ENCODE measurements at regions of chr5 and their contacts with region 1.

Region 1: GRCh38 chr5:108003178-108003577 is 332.4 kb upstream of the EFNA5 start:
- DNase-seq: peak; percentile 61
- ATAC-seq: peak; percentile 67
- H3K4me3 ChIP-seq: peak overlapping the region; percentile 49
- H3K27ac ChIP-seq: peak overlapping the region; percentile 35; the same call in 1 of the 2 replicates
- H3K4me1 ChIP-seq: no peaks in the 10 kb centered on the region
- H3K27me3 ChIP-seq: no peaks in the 10 kb centered on the region
- CTCF ChIP-seq: no peak
- POLR2A ChIP-seq: no peak
- RAD21 ChIP-seq: no peak

Region 2: DNA sequence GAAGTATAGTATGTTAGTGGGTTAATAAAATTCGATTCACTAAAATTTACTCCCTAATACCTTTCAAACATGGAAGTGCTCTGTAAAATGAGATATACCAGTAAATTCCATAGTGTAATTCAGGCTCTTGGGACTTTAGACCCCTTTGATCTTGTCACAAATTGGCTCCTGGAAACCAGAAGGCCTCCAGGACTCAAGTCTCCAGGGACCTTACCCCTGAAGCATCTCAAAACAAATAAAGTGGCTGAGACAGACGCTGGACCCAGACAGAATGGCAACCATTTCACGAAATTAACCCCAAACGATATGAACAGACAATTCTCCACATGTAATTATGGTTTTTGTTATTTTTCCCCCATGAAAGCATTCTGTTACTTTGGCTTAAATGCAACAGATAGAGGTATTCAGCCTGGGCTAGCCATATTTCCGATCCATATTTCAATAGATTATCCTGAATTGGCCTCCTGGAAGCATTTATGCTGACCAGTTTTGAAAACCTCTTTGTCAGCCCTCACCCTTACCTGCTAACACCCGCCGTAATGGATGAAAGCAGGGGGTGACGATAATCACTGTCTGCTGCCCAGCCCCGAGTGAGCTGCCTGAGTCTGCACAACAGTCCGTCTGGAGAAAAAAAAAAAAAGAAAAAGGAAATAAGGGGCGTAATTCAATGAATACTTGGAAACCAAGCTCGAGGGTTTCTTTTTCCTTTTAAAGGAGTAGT is 298.3 kb before region 1 on chr5:
- CTCF ChIA-PET with region 1: interaction called, 10 read pairs
- POLR2A ChIA-PET with region 1: no interaction called
- dilution Hi-C with region 1: no loop called
- in situ Hi-C with region 1: no loop called
- intact Hi-C with region 1: no loop called
- DNase-seq: no peak
- ATAC-seq: peak; percentile 21; the same call in 1 of the 2 replicates
- H3K4me3 ChIP-seq: no peak overlapping the region
- H3K27ac ChIP-seq: no peak overlapping the region
- H3K4me1 ChIP-seq: no peaks in the 10 kb centered on the region
- H3K27me3 ChIP-seq: no peaks in the 10 kb centered on the region
- CTCF ChIP-seq: no peak
- POLR2A ChIP-seq: no peak
- RAD21 ChIP-seq: no peak